ENCODE measurements at regions of chr4 and their contacts with region 1.

Region 1: GRCh38 chr4:28831867-28832266 is 1888.3 kb upstream of the PCDH7 start:
- DNase-seq: no peak
- ATAC-seq: no peak

Region 2: DNA sequence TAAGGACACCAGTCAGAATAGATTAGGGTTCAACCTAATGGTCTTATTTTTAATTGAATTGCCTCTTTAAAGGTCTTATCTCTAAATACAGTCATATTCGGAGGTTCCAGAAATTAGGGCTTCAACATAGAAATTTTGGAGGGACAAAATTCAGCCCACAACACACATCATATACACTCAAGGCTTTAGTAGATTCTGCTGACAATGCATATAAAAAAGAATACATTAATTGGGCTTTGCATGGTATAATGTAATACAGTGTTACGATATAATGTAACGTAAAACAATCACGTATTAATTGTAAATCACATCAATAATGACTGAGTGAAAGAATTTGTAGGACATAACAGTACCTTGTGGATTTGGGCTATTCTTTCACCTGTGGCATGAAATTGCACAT is 1183.5 kb before region 1 on chr4:
- intact Hi-C with region 1: no loop called
- DNase-seq: no peak
- ATAC-seq: no peak

Region 3: GRCh38 chr4:28842281-28842680 is 10.4 kb after region 1 on chr4:
- intact Hi-C with region 1: loop called in 1 of 2 experiments (anchors 1 kb)
- DNase-seq: no peak
- ATAC-seq: no peak